ENCODE measurements at regions of chr11 and their contacts with region 1.

Region 1: DNA sequence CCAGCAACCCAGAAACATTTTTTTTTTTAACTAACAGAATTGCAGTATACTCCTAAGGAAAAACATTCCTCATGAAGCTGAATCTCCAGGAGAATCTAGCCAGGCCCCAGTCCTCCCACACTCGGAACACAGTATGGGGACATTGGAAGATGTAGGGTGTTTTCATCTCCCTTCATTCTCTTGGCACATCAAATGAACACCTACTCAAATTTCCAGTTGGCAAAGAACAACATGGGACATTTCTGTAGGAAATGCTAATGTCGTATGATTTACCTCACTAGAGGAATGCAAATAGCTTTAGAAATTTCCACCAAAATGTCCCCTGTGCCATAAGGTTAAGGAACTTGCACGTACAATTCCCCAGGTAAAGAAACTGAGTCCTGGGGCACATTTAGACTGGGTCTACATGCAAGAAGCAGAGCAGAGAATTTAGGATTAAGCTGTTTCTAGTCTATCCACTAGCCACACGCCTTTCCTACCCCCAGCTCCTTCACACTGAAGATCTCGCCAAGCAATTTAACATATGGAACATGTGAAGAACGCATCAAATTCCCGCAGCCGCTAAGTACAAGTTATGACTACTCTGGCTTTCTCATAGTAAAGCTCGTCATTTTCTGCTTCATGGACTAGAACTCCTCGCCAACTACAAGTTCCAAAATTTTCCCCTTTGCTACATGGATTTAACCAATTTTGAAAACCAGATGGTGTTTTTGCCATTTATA is 2.9 kb upstream of the CADM1 start:
- DNase-seq: no peak
- ATAC-seq: no peak
- H3K4me3 ChIP-seq: no peak overlapping the region
- H3K27ac ChIP-seq: no peak overlapping the region
- H3K4me1 ChIP-seq: peaks cover 0 to 9% of the 10 kb centered on the region in 2 experiments; a peak in 2 of 5 replicates
- H3K27me3 ChIP-seq: peaks cover 0 to 5% of the 10 kb centered on the region in 2 experiments; a peak in 1 of 5 replicates
- CTCF ChIP-seq: no peak
- EP300 ChIP-seq: no peak
- POLR2A ChIP-seq: no peak
- RAD21 ChIP-seq: no peak

Region 2: GRCh38 chr11:115522302-115522701 is 15.2 kb after region 1 on chr11:
- CTCF ChIA-PET with region 1: no interaction called
- POLR2A ChIA-PET with region 1: interaction called, 11 read pairs
- in situ Hi-C with region 1: no loop called
- intact Hi-C with region 1: no loop called
- DNase-seq: no peak
- ATAC-seq: no peak
- H3K4me3 ChIP-seq: no peak overlapping the region
- H3K27ac ChIP-seq: no peak overlapping the region
- H3K4me1 ChIP-seq: no peaks in the 10 kb centered on the region
- H3K27me3 ChIP-seq: no peaks in the 10 kb centered on the region
- CTCF ChIP-seq: no peak
- EP300 ChIP-seq: no peak
- POLR2A ChIP-seq: no peak
- RAD21 ChIP-seq: no peak

Measured in K562 (cell line).